PC-3 (cell line): ENCODE measurements at regions of chr14 and their contacts with region 1.

Region 1: DNA sequence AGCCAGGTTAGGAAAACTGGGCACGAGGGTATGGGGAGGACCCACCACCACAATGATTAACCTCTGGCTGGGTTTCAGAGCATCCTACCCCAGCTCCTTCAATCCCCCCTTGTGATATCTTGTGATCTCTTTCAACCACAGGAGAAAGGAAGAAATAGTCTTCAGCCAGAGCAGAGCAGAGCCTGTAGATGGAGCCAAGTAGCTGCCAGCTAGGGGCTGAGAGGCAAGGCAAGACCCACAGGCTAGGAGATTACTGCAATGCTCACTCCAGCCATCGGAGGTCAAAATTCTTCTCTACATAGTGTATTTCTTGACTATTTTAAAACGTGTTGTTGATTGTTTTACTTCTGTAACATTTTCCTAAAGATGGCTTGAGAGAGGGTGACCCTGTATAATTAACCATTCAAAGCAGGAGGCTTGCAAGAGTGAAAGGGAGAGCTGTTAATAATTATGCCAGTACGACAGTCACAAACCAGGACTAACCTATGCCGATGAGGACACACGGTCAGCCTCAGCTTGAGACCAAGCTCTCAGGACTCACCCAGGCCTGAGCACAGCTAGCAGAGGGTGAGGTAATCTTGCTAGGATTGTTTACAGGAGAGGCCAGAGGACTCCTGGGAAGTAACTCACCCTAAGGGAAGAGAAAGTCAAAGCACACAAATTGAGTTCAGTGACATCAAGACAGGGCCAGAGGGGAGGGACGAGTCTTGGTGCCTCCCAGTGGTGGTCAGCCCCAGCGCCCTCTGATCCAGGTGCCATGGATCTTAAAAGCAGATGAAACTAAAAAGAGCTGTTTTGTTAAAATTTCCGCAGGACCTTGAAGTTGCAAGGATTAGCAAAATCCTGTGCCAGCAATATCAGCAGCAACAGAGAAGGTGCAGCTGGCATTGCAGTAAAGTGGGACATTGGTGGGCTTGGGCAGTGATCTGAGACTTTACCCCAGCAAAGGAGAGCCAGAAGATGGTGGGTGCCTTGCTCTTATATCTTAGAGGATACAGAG is 29.8 kb upstream of the CDKN3 start:
- DNase-seq: peak; percentile 88
- ATAC-seq: peak; percentile 71
- H3K4me3 ChIP-seq: no peak overlapping the region
- H3K27ac ChIP-seq: no peak overlapping the region
- H3K4me1 ChIP-seq: peaks cover 60% of the 10 kb centered on the region
- H3K27me3 ChIP-seq: no peaks in the 10 kb centered on the region
- CTCF ChIP-seq: peak; percentile 98

Region 2: DNA sequence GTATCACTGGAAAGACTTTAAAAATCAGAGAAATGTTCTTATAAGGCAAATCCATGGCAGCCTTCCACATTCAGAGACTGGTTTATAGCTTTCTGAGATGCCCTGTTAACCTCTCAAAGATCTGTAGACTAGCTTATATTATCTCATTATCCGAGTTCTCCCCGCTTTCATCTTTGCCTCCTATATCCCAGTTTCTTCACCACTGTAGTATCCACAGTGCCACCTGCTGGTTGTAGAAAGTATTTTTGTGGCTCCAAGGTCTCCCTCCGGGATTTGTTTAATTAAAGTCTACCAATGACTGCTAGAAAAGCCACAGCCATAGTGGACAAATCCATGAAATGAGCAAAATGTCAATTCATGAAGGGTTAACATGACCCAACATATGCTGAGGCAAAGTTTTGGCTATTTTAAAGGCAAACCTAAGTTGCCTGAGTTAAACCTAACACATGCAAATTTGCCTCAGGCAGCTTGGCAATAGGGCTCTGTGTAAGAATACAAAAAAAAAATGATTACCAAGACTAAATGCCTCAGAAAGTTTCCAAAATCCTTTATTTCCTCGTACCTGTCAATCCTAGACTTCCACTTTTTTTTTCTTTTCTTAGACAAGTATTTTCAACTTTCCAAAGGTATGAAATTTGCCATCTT is 191.6 kb before region 1 on chr14:
- CTCF ChIA-PET with region 1: no interaction called
- POLR2A ChIA-PET with region 1: no interaction called
- intact Hi-C with region 1: no loop called
- DNase-seq: peak; percentile 100
- ATAC-seq: peak; percentile 61
- H3K4me3 ChIP-seq: no peak overlapping the region
- H3K27ac ChIP-seq: no peak overlapping the region
- H3K4me1 ChIP-seq: peaks cover 73% of the 10 kb centered on the region
- H3K27me3 ChIP-seq: no peaks in the 10 kb centered on the region
- CTCF ChIP-seq: peak; percentile 100

Region 3: GRCh38 chr14:54356172-54356571 is 10.9 kb before region 1 on chr14:
- CTCF ChIA-PET with region 1: interaction called, 9 read pairs
- POLR2A ChIA-PET with region 1: interaction called, 4 read pairs
- intact Hi-C with region 1: loop called (anchors 1 kb)
- DNase-seq: peak; percentile 100
- ATAC-seq: peak; percentile 83
- H3K4me3 ChIP-seq: peak overlapping the region; percentile 27
- H3K27ac ChIP-seq: peak overlapping the region; percentile 88
- H3K4me1 ChIP-seq: peaks cover 53% of the 10 kb centered on the region
- H3K27me3 ChIP-seq: no peaks in the 10 kb centered on the region
- CTCF ChIP-seq: no peak

Region 4: DNA sequence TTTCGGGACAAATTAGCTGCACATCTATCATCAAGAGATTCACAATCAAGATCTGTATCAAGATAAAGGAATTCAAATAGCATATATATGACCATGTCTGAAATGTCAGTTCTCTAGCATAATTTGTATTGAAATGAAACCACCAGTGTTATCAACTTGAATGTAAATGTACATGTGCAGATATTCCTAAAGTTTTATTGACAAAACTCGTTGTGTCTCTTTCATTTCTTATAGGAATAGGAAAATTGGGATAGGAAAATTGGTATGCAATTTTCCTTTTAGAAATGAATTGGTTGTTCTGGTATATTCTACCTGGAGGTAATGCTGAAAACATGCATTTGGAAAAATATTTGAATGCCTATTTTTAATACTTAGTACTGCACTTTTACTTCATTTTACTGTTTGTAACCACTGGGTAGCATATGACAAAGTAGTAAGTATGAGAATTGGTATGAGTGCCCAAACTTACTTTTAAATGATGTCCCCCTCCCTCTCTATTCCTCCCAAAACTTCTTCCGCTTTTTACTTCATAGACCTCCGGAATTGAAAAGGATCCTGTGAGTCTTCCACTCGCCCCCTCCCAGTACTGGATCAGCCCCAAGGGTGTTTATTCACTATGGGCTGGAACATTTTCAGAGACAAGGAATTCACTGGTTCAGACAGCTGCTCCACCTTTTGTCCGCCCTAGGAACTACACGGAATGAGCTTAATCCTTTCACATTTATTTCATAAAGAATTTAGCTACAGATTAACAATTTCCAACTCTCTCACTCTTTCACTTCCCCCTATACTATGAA is 53.2 kb after region 1 on chr14:
- CTCF ChIA-PET with region 1: interaction called, 55 read pairs
- POLR2A ChIA-PET with region 1: interaction called, 7 read pairs
- intact Hi-C with region 1: loop called (anchors 1 kb)
- DNase-seq: peak; percentile 89
- ATAC-seq: peak; percentile 82
- H3K4me3 ChIP-seq: no peak overlapping the region
- H3K27ac ChIP-seq: no peak overlapping the region
- H3K4me1 ChIP-seq: no peaks in the 10 kb centered on the region
- H3K27me3 ChIP-seq: no peaks in the 10 kb centered on the region
- CTCF ChIP-seq: peak; percentile 96

Region 5: DNA sequence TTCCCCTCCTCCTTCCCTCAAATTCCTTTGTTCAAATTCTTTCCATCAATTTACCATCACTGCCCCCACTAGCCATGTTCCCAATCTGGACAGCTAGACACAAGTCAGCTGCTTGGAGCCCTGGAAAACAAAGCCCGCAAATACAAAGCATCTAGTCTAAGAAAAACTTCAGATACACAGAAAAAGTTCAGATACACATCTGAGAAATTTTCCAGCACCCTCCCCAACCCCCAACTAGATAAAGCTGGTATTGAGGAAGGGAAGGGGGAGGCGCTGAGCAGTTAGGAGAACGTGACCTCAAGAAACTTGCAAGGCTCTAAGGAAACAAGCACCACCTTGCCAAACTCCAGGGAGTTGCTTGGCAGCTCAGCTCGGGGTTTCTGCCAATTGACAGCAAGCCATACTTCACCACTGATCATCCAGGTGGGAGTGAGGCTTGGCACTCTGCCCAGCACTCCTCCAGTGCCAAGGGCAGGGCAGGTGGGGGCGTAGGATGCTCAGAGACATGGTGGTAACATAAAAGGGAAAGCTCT is 79.2 kb after region 1 on chr14:
- CTCF ChIA-PET with region 1: interaction called, 7 read pairs
- POLR2A ChIA-PET with region 1: interaction called, 16 read pairs
- intact Hi-C with region 1: loop called (anchors 1 kb)
- DNase-seq: peak; percentile 71
- ATAC-seq: no peak
- H3K4me3 ChIP-seq: no peak overlapping the region
- H3K27ac ChIP-seq: peak overlapping the region; percentile 61; the same call in 1 of the 2 replicates
- H3K4me1 ChIP-seq: peaks cover 27% of the 10 kb centered on the region
- H3K27me3 ChIP-seq: no peaks in the 10 kb centered on the region
- CTCF ChIP-seq: no peak

Region 6: GRCh38 chr14:54509546-54510501 is 142.8 kb after region 1 on chr14 and contains the start of gene CGRRF1:
- CTCF ChIA-PET with region 1: interaction called, 3 read pairs
- POLR2A ChIA-PET with region 1: no interaction called
- intact Hi-C with region 1: loop called (anchors 1 kb)
- DNase-seq: peak; percentile 100
- ATAC-seq: peak; percentile 97
- H3K4me3 ChIP-seq: peak within 1 kb of the TSS; percentile 89
- H3K27ac ChIP-seq: no peak within 1 kb of the TSS
- H3K4me1 ChIP-seq: peaks cover 19% of the 10 kb centered on the region
- H3K27me3 ChIP-seq: no peaks in the 10 kb centered on the region
- CTCF ChIP-seq: peak; percentile 67
- total RNA-seq, gene CGRRF1: 31.3 and 31.5 TPM in 2 replicates